Ovary (tissue), 10 donors: ENCODE measurements at regions of chr3 and their contacts with region 1.

Region 1: DNA sequence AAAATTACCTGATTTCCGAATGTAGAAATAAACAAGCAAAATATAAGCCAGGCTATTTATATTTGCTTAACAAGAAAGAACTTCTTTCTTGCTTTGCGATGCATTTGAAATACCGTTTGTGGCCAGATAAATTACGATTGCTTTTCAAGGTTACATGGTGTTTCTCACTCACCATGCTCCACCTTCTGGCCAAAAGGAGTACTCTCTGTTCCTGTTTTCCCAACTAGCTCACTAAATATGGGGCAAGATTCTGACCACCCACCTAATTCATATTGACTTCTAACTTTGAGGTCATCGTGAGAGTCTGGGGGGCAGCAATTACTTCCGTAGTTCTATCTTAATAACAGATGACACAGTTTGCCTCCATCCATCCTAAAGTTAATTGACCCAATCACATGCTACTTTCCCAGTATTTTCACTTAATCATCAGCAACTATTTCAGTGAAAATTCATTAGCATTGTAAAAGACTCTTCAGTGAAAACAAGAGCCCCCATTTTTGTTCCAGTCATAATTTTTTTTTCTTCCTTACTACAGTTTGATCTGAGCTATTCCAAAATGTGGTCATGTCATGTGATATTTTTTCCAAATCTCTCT is 25.9 kb downstream of the ACP3 start:
- DNase-seq: peak in 4 of 5 donors; percentile 18 to 60 (median 30)
- H3K4me3 ChIP-seq: no peak overlapping the region
- H3K27ac ChIP-seq: no peak overlapping the region
- H3K4me1 ChIP-seq: no peaks in the 10 kb centered on the region
- H3K27me3 ChIP-seq: no peaks in the 10 kb centered on the region
- CTCF ChIP-seq: peak; percentile 62 to 91 (median 82)
- EP300 ChIP-seq: no peak
- POLR2A ChIP-seq: no peak

Region 2: DNA sequence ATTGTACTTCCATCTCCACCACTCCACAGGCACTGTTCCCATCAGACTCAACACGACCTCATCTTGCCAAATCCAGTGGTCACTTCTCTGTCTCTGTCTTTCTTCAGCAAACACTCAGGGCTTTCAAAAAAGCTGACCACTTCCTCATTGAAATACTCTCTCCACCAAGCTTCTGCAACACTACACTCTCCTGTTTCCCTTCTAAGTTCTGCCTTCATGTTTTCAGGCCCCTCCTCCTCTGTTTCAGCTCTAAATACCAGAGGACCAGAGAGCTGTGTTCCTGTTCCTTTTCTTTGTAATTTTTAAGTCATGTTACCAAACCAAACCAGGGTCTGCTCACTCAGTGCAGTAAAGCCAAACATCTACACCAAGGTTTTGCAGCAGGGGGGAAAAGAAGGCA is 59.7 kb before region 1 on chr3:
- intact Hi-C with region 1: no loop called
- DNase-seq: no peak
- H3K4me3 ChIP-seq: no peak overlapping the region
- H3K27ac ChIP-seq: no peak overlapping the region
- H3K4me1 ChIP-seq: no peaks in the 10 kb centered on the region
- H3K27me3 ChIP-seq: no peaks in the 10 kb centered on the region
- CTCF ChIP-seq: no peak
- EP300 ChIP-seq: no peak
- POLR2A ChIP-seq: no peak

Region 3: DNA sequence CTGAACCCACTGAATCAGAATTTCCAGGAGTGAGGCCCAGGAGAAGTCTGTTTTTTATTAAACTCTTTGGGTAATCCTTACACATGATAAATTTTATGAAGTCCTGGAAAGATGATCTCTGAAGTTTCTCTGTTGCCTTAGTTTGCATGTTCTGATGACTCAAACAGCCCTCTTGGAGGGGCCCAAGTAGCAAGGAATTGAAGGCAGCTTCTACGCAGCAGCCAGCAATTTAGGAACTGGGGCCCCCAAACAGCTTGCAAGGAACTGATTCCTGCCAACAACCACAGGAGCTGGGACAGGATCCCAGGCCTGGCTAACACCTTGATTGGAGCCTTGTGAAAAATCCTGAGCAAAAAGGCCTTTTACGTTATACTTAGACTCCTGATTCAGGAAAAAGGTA is 31.3 kb before region 1 on chr3:
- intact Hi-C with region 1: loop called in 1 of 4 experiments (anchors 5 kb)
- DNase-seq: no peak
- H3K4me3 ChIP-seq: no peak overlapping the region
- H3K27ac ChIP-seq: no peak overlapping the region
- H3K4me1 ChIP-seq: peaks cover 2% of the 10 kb centered on the region
- H3K27me3 ChIP-seq: no peaks in the 10 kb centered on the region
- CTCF ChIP-seq: no peak
- EP300 ChIP-seq: no peak
- POLR2A ChIP-seq: no peak